ENCODE measurements at regions of chr16 and their contacts with region 1.

Region 1: GRCh38 chr16:8963825-8964441 is at the start of gene USP7:
- DNase-seq: peak; percentile 76 to 84 (median 82)
- H3K4me3 ChIP-seq: peak within 1 kb of the TSS; percentile 60 to 94 (median 74)
- H3K4me3 Mint-ChIP-seq: peak within 1 kb of the TSS; percentile 96 to 98
- H3K27ac ChIP-seq: peak within 1 kb of the TSS; percentile 90 to 94
- H3K27ac Mint-ChIP-seq: peak within 1 kb of the TSS; percentile 81 to 94 (median 91)
- H3K4me1 ChIP-seq: peaks cover 65 to 73% of the 10 kb centered on the region in 2 donors
- H3K4me1 Mint-ChIP-seq: peaks cover 64% of the 10 kb centered on the region
- H3K27me3 ChIP-seq: no peaks in the 10 kb centered on the region
- H3K27me3 Mint-ChIP-seq: peaks cover 0 to 2% (median 0%) of the 10 kb centered on the region in 3 donors
- CTCF ChIP-seq: no peak
- polyA plus RNA-seq, gene USP7: 2.4 to 31.7 (median 4.1) TPM

Region 2: DNA sequence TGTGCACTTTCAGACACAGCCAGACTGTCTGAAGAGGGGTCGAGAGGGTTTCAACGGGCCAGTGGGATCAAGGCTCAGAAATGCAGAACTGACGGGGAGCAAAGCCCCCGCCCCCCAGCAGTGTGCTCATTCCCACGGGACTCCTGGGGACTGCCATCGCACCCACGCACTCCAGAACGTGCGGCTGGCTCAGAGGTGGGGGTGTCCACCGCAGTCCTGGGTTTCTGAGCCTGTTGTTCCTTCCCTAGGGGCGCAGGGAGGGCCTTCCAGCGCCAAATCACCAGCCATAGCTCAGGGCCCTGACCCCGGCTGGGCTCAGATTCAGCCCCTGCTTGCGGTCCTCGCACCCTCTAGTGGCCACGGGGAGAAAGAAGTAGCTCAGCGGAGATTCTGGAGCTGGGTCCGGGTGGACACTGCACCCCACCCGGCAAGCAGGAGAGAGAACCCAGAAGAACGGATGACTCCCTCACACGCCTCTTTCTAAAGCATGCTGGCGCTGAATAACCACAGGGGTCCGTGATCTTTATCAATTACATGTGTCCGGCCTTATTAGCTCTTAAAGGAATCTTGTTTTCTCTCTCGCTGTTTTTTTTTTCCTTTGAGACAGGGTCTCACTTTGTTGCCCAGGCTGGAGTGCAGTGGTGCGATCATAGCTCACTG is 44.8 kb after region 1 on chr16:
- intact Hi-C with region 1: loop called in 1 of 2 experiments (anchors 5 kb)
- DNase-seq: peak; percentile 56 to 67 (median 57)
- H3K4me3 ChIP-seq: peak overlapping the region in 2 of 3 experiments; percentile 9 to 62
- H3K4me3 Mint-ChIP-seq: peak overlapping the region; percentile 54 to 80
- H3K27ac ChIP-seq: no peak overlapping the region
- H3K27ac Mint-ChIP-seq: peak overlapping the region in 1 of 7 donors; percentile 36
- H3K4me1 ChIP-seq: peaks cover 7 to 8% of the 10 kb centered on the region in 2 donors
- H3K4me1 Mint-ChIP-seq: peaks cover 8% of the 10 kb centered on the region
- H3K27me3 ChIP-seq: peaks cover 0 to 13% of the 10 kb centered on the region in 2 donors
- H3K27me3 Mint-ChIP-seq: peaks cover 16 to 30% (median 23%) of the 10 kb centered on the region in 3 donors
- CTCF ChIP-seq: peak; percentile 83

Region 3: GRCh38 chr16:9090960-9091866 is 127.3 kb after region 1 on chr16 and contains the start of gene HAPSTR1:
- intact Hi-C with region 1: loop called (anchors 5 to 10 kb)
- DNase-seq: peak; percentile 100
- H3K4me3 ChIP-seq: peak within 1 kb of the TSS; percentile 76 to 100 (median 98)
- H3K4me3 Mint-ChIP-seq: peak within 1 kb of the TSS; percentile 99
- H3K27ac ChIP-seq: peak within 1 kb of the TSS; percentile 91 to 93
- H3K27ac Mint-ChIP-seq: peak within 1 kb of the TSS; percentile 93 to 99 (median 97)
- H3K4me1 ChIP-seq: peaks cover 36 to 44% of the 10 kb centered on the region in 2 donors
- H3K4me1 Mint-ChIP-seq: peaks cover 23% of the 10 kb centered on the region
- H3K27me3 ChIP-seq: no peaks in the 10 kb centered on the region
- H3K27me3 Mint-ChIP-seq: peaks cover 0 to 4% (median 2%) of the 10 kb centered on the region in 3 donors
- CTCF ChIP-seq: no peak
- polyA plus RNA-seq, gene HAPSTR1: 7.2 to 58.9 (median 11.1) TPM

Region 4: DNA sequence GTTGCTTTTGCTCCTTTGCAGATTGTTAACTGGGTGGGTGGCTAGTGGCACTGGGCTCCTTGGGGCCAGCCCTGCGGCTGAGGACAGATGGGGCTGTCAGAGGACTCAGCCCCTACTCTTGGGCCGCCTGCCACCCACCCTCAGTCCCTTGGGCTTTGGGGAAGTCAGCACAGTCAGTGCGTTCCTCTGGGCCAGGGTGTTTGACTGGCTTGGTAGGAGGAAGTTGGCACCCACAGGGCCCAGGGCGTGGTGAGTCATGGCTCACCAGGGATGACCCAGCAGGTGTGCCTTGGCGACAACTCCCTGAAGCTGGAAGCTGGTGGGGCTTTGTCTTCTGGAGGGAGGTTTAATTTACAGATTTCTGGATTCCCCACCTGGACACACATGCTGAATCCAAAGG is 159.9 kb after region 1 on chr16:
- intact Hi-C with region 1: loop called in 1 of 2 experiments (anchors 10 kb)
- DNase-seq: peak; percentile 86 to 96 (median 93)
- H3K4me3 ChIP-seq: peak overlapping the region in 1 of 3 experiments; percentile 0
- H3K4me3 Mint-ChIP-seq: peak overlapping the region in 1 of 2 donors; percentile 42
- H3K27ac ChIP-seq: peak overlapping the region; percentile 26 to 73
- H3K27ac Mint-ChIP-seq: peak overlapping the region; percentile 80 to 95 (median 86)
- H3K4me1 ChIP-seq: peaks cover 32 to 44% of the 10 kb centered on the region in 2 donors
- H3K4me1 Mint-ChIP-seq: peaks cover 57% of the 10 kb centered on the region
- H3K27me3 ChIP-seq: no peaks in the 10 kb centered on the region
- H3K27me3 Mint-ChIP-seq: peaks cover 0 to 2% (median 0%) of the 10 kb centered on the region in 3 donors
- CTCF ChIP-seq: no peak

Region 5: GRCh38 chr16:9134739-9135138 is 170.8 kb after region 1 on chr16:
- intact Hi-C with region 1: loop called (anchors 10 kb)
- DNase-seq: peak; percentile 35 to 69 (median 58)
- H3K4me3 ChIP-seq: no peak overlapping the region
- H3K4me3 Mint-ChIP-seq: no peak overlapping the region
- H3K27ac ChIP-seq: no peak overlapping the region
- H3K27ac Mint-ChIP-seq: peak overlapping the region in 1 of 7 donors; percentile 75
- H3K4me1 ChIP-seq: peaks cover 4% of the 10 kb centered on the region in 2 donors
- H3K4me1 Mint-ChIP-seq: peaks cover 12% of the 10 kb centered on the region
- H3K27me3 ChIP-seq: peaks cover 0 to 9% of the 10 kb centered on the region in 2 donors
- H3K27me3 Mint-ChIP-seq: peaks cover 23 to 28% (median 24%) of the 10 kb centered on the region in 3 donors
- CTCF ChIP-seq: peak; percentile 83

Measured in CD14-positive monocyte (primary cell).